ENCODE measurements at regions of chr1 and their contacts with region 1.

Region 1: DNA sequence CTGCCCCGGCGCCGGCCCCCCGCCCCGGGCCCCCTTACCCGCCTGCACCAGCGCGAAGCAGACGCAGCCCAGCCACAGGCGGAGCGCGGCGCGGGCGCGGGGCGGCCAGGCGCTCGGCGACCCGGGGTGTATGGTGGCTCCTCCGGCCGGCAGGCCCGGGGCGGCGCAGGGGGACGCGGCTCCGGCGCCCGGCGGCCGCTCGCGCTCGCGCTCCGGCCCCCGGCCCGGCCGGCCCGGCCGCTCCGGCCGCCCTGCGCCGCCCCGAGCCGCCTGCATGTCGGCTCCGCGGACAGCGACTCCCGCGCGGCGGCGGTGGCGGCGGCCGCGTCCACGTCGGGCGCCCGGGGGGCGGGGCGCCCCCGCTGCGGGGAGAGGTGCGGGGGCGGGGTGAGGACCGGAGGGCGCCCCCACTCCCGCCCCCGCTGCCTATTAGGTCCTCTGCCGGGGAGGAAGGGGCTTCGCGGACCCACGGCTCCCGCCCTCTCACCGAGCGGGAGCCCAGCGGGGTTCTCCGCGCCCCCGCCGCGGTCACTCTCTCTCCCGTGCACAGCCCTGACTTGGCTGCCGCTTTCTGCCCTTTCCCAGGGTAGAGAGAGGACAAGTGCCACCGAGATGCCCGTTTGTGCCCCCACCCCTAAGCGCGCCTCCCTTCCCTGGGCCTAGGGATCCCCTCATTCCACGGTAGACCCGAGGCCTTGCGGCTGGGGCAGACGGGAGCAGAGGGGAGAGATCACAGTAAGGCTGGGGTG is at the start of gene FNDC5:
- DNase-seq: peak; percentile 56
- ATAC-seq: peak; percentile 49
- H3K4me3 Mint-ChIP-seq: peak within 1 kb of the TSS; percentile 76
- H3K27ac Mint-ChIP-seq: no peak within 1 kb of the TSS
- H3K4me1 Mint-ChIP-seq: peaks cover 32% of the 10 kb centered on the region
- H3K27me3 Mint-ChIP-seq: peaks cover 39% of the 10 kb centered on the region
- CTCF ChIP-seq: no peak
- total RNA-seq, gene FNDC5: 1.2 to 1.6 TPM (median 1.4 TPM) in 3 replicates

Region 2: GRCh38 chr1:32886004-32886827 is 15.4 kb after region 1 on chr1 and contains the start of gene HPCA:
- CTCF ChIA-PET with region 1: interaction called, 93 read pairs
- POLR2A ChIA-PET with region 1: no interaction called
- DNase-seq: peak; percentile 90
- ATAC-seq: peak; percentile 94
- H3K4me3 Mint-ChIP-seq: peak within 1 kb of the TSS; percentile 65
- H3K27ac Mint-ChIP-seq: no peak within 1 kb of the TSS
- H3K4me1 Mint-ChIP-seq: peaks cover 12% of the 10 kb centered on the region
- H3K27me3 Mint-ChIP-seq: peaks cover 74% of the 10 kb centered on the region
- CTCF ChIP-seq: peak; percentile 30; the same call in 1 of the 2 replicates
- total RNA-seq, gene HPCA: 1.5 to 2.2 TPM (median 1.9 TPM) in 3 replicates

Region 3: GRCh38 chr1:33022650-33023200 is 151.9 kb after region 1 on chr1:
- CTCF ChIA-PET with region 1: no interaction called
- POLR2A ChIA-PET with region 1: no interaction called
- DNase-seq: no peak
- ATAC-seq: no peak
- H3K4me3 Mint-ChIP-seq: no peak overlapping the region
- H3K27ac Mint-ChIP-seq: no peak overlapping the region
- H3K4me1 Mint-ChIP-seq: peaks cover 20% of the 10 kb centered on the region
- H3K27me3 Mint-ChIP-seq: no peaks in the 10 kb centered on the region
- CTCF ChIP-seq: no peak